CD8-positive, alpha-beta T cell (primary cell): ENCODE measurements at regions of chr10 and their contacts with region 1.

Region 1: GRCh38 chr10:88835096-88835909 is 16.3 kb downstream of the ANKRD22 start:
- DNase-seq: peak; percentile 73 to 92 (median 86)
- ATAC-seq: peak; percentile 85
- H3K4me3 ChIP-seq: no peak overlapping the region
- H3K4me3 Mint-ChIP-seq: no peak overlapping the region
- H3K27ac ChIP-seq: no peak overlapping the region
- H3K27ac Mint-ChIP-seq: no peak overlapping the region
- H3K4me1 ChIP-seq: peaks cover 17% of the 10 kb centered on the region
- H3K4me1 Mint-ChIP-seq: peaks cover 33% of the 10 kb centered on the region
- H3K27me3 ChIP-seq: no peaks in the 10 kb centered on the region
- H3K27me3 Mint-ChIP-seq: no peaks in the 10 kb centered on the region
- CTCF ChIP-seq: peak; percentile 78

Region 2: GRCh38 chr10:88624840-88625239 is 210.5 kb before region 1 on chr10:
- CTCF ChIA-PET with region 1: no interaction called
- POLR2A ChIA-PET with region 1: no interaction called
- intact Hi-C with region 1: no loop called
- DNase-seq: no peak
- ATAC-seq: no peak
- H3K4me3 ChIP-seq: no peak overlapping the region
- H3K4me3 Mint-ChIP-seq: no peak overlapping the region
- H3K27ac ChIP-seq: no peak overlapping the region
- H3K27ac Mint-ChIP-seq: no peak overlapping the region
- H3K4me1 ChIP-seq: no peaks in the 10 kb centered on the region
- H3K4me1 Mint-ChIP-seq: no peaks in the 10 kb centered on the region
- H3K27me3 ChIP-seq: no peaks in the 10 kb centered on the region
- H3K27me3 Mint-ChIP-seq: peaks cover 2% of the 10 kb centered on the region
- CTCF ChIP-seq: no peak

Region 3: DNA sequence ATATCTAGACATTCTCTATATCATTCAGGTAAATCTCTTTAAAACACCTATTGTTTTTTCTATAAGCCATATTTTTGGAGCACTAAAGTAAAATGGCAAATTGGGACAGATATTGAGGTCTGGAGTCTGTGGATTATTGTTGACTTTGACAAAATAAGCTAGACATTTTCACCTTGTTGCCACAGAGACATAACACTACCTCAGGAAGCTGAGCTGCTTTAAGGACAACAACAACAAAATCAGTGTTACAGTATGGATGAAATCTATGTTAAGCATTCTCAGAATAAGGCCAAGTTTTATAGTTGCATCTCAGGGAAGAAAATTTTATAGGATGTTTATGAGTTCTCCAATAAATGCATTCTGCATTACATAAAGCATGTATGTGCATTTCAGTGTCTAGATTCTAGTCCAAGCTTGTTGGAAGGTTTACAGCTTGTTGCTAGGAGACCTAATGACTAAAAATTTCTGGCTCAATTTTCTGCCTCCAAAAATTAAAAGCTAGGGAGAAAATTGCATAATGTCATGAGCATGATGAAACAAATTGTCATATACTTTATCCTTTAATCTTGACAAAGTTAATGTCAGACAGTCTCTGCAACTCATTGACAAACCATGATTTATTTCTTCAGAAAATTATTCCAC is 14.4 kb before region 1 on chr10:
- CTCF ChIA-PET with region 1: interaction called, 75 read pairs
- POLR2A ChIA-PET with region 1: interaction called, 6 read pairs
- intact Hi-C with region 1: loop called in 1 of 2 experiments (anchors 2 kb)
- DNase-seq: no peak
- ATAC-seq: no peak
- H3K4me3 ChIP-seq: no peak overlapping the region
- H3K4me3 Mint-ChIP-seq: no peak overlapping the region
- H3K27ac ChIP-seq: no peak overlapping the region
- H3K27ac Mint-ChIP-seq: no peak overlapping the region
- H3K4me1 ChIP-seq: peaks cover 15% of the 10 kb centered on the region
- H3K4me1 Mint-ChIP-seq: peaks cover 43% of the 10 kb centered on the region
- H3K27me3 ChIP-seq: no peaks in the 10 kb centered on the region
- H3K27me3 Mint-ChIP-seq: no peaks in the 10 kb centered on the region
- CTCF ChIP-seq: no peak

Region 4: GRCh38 chr10:88865281-88865876 is 30.1 kb after region 1 on chr10:
- CTCF ChIA-PET with region 1: interaction called, 12 read pairs
- POLR2A ChIA-PET with region 1: interaction called, 3 read pairs
- intact Hi-C with region 1: loop called in 1 of 2 experiments (anchors 1 kb)
- DNase-seq: peak in 2 of 9 experiments; percentile 13 to 35
- ATAC-seq: no peak
- H3K4me3 ChIP-seq: no peak overlapping the region
- H3K4me3 Mint-ChIP-seq: no peak overlapping the region
- H3K27ac ChIP-seq: no peak overlapping the region
- H3K27ac Mint-ChIP-seq: no peak overlapping the region
- H3K4me1 ChIP-seq: no peaks in the 10 kb centered on the region
- H3K4me1 Mint-ChIP-seq: no peaks in the 10 kb centered on the region
- H3K27me3 ChIP-seq: no peaks in the 10 kb centered on the region
- H3K27me3 Mint-ChIP-seq: no peaks in the 10 kb centered on the region
- CTCF ChIP-seq: no peak

Region 5: GRCh38 chr10:88901206-88901983 is 66.1 kb after region 1 on chr10:
- CTCF ChIA-PET with region 1: interaction called, 20 read pairs
- POLR2A ChIA-PET with region 1: no interaction called
- intact Hi-C with region 1: no loop called
- DNase-seq: peak in 1 of 9 experiments; percentile 24
- ATAC-seq: peak; percentile 40
- H3K4me3 ChIP-seq: no peak overlapping the region
- H3K4me3 Mint-ChIP-seq: no peak overlapping the region
- H3K27ac ChIP-seq: peak overlapping the region in 1 of 2 experiments; percentile 1
- H3K27ac Mint-ChIP-seq: peak overlapping the region; percentile 53
- H3K4me1 ChIP-seq: peaks cover 10% of the 10 kb centered on the region
- H3K4me1 Mint-ChIP-seq: peaks cover 47% of the 10 kb centered on the region
- H3K27me3 ChIP-seq: no peaks in the 10 kb centered on the region
- H3K27me3 Mint-ChIP-seq: no peaks in the 10 kb centered on the region
- CTCF ChIP-seq: no peak

Region 6: GRCh38 chr10:88990384-88991160 is 155.3 kb after region 1 on chr10 and contains the start of gene FAS:
- CTCF ChIA-PET with region 1: interaction called, 13 read pairs
- POLR2A ChIA-PET with region 1: interaction called, 3 read pairs
- intact Hi-C with region 1: loop called (anchors 5 kb)
- DNase-seq: peak; percentile 44 to 95 (median 79)
- ATAC-seq: peak; percentile 72
- H3K4me3 ChIP-seq: peak within 1 kb of the TSS; percentile 79 to 92
- H3K4me3 Mint-ChIP-seq: peak within 1 kb of the TSS; percentile 98
- H3K27ac ChIP-seq: peak within 1 kb of the TSS; percentile 52 to 78
- H3K27ac Mint-ChIP-seq: peak within 1 kb of the TSS; percentile 97
- H3K4me1 ChIP-seq: peaks cover 41% of the 10 kb centered on the region
- H3K4me1 Mint-ChIP-seq: peaks cover 70% of the 10 kb centered on the region
- H3K27me3 ChIP-seq: no peaks in the 10 kb centered on the region
- H3K27me3 Mint-ChIP-seq: no peaks in the 10 kb centered on the region
- CTCF ChIP-seq: no peak
- total RNA-seq, gene FAS: 27.7 to 28.9 TPM

Region 7: DNA sequence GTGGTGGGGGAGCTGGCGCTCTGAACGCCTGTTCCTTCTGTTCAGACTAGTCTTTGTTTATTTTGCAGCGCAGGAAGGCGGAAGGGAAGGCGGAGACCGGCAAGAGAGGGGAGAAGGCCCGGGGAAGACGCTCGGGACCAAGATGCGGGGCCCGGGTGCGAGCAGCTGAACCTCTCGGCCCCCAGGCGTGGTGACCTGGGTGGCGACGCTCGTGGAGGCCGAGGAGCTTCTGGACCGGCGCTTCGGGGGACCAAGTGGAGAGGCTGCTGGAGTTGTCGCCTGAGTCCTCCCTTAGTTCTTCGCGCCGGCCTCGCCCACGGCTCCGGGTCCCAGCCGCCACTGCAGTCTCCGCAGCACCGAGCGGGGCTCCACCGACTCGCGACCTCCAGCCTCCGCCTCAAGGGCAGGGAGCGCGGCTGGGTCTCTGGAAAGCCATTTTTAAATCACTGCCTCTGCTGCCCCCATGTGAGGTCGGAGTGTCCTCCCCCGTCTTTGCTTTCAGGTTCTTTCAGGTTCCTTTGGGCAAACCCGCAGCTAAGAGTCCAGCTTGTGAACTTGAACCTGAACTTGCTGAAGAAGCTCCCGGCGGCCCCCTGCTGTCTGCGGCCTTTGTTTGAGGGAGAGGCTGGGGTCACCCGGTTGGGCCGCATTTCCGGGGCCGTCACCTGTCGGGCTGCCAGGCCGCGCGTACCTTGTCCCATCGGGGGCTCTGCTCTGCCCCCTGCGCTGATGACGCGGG is 1002.0 kb after region 1 on chr10:
- CTCF ChIA-PET with region 1: no interaction called
- POLR2A ChIA-PET with region 1: no interaction called
- intact Hi-C with region 1: no loop called
- DNase-seq: peak in 5 of 9 experiments; percentile 20 to 52 (median 33)
- ATAC-seq: peak; percentile 57
- H3K4me3 ChIP-seq: peak overlapping the region; percentile 65 to 78
- H3K4me3 Mint-ChIP-seq: peak overlapping the region; percentile 86
- H3K27ac ChIP-seq: peak overlapping the region in 1 of 2 experiments; percentile 22
- H3K27ac Mint-ChIP-seq: peak overlapping the region; percentile 77
- H3K4me1 ChIP-seq: peaks cover 8% of the 10 kb centered on the region
- H3K4me1 Mint-ChIP-seq: peaks cover 12% of the 10 kb centered on the region
- H3K27me3 ChIP-seq: peaks cover 0 to 7% of the 10 kb centered on the region in 2 experiments
- H3K27me3 Mint-ChIP-seq: no peaks in the 10 kb centered on the region
- CTCF ChIP-seq: no peak